Caco-2 (cell line): ENCODE measurements at regions of chr14 and their contacts with region 1.

Region 1: GRCh38 chr14:103500148-103500990 is 22.3 kb downstream of the CKB start:
- DNase-seq: peak; percentile 74 to 84
- H3K4me3 ChIP-seq: no peak overlapping the region
- H3K4me3 Mint-ChIP-seq: no peak overlapping the region
- H3K27ac Mint-ChIP-seq: peak overlapping the region; percentile 47
- H3K4me1 ChIP-seq: no peaks in the 10 kb centered on the region
- H3K4me1 Mint-ChIP-seq: no peaks in the 10 kb centered on the region
- H3K27me3 ChIP-seq: no peaks in the 10 kb centered on the region
- H3K27me3 Mint-ChIP-seq: no peaks in the 10 kb centered on the region
- CTCF ChIP-seq: peak; percentile 80 to 95

Region 2: GRCh38 chr14:103534576-103535061 is 34.2 kb after region 1 on chr14:
- CTCF ChIA-PET with region 1: no interaction called
- POLR2A ChIA-PET with region 1: no interaction called
- intact Hi-C with region 1: no loop called
- DNase-seq: no peak
- H3K4me3 ChIP-seq: no peak overlapping the region
- H3K4me3 Mint-ChIP-seq: no peak overlapping the region
- H3K27ac Mint-ChIP-seq: no peak overlapping the region
- H3K4me1 ChIP-seq: 0 out of 2 replicates have a peak, but pooled peaks cover 7% of the 10 kb centered on the region
- H3K4me1 Mint-ChIP-seq: no peaks in the 10 kb centered on the region
- H3K27me3 ChIP-seq: no peaks in the 10 kb centered on the region
- H3K27me3 Mint-ChIP-seq: no peaks in the 10 kb centered on the region
- CTCF ChIP-seq: no peak

Region 3: DNA sequence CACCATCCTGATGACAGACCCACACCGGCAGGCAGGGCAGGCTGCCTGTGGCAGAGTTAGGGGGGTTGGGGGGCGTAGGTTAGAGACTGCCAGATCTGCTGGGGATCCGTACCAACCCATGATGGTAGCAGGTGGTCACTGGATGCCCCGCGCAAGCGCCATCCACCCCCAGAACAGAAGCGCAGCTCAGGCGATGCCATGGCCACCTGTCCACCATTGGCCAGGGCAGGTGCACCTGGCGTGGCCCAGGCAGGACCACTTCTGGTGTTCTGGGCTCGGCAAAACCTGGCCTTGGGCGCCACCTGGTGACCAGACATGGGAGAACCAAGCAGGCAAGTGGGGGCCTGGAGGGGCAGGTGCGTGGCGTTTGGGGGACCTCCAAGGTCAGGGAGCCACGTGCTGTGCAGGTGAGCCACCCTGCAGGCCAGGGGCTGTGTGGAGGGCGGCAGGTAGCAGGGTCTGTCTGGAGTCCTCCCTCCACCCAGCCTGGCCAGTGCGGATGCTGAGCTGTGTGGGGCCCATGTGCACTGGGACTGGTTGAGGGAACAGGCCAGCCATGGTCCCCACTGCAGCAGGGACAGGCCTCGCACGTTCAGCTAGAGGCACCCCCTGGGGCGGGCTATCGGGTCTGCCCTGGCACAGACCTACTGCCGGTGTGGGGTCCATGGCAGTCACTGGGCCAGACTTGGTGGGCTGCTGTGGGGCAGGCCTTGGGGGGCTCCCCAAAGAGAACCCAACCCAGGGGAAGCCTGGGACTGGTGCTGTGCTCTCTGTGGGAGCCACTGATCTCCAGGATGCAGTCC is 46.5 kb after region 1 on chr14:
- CTCF ChIA-PET with region 1: interaction called, 3 read pairs
- POLR2A ChIA-PET with region 1: no interaction called
- intact Hi-C with region 1: loop called (anchors 1 kb)
- DNase-seq: peak; percentile 73 to 85
- H3K4me3 ChIP-seq: no peak overlapping the region
- H3K4me3 Mint-ChIP-seq: no peak overlapping the region
- H3K27ac Mint-ChIP-seq: no peak overlapping the region
- H3K4me1 ChIP-seq: peaks cover 6% of the 10 kb centered on the region
- H3K4me1 Mint-ChIP-seq: no peaks in the 10 kb centered on the region
- H3K27me3 ChIP-seq: no peaks in the 10 kb centered on the region
- H3K27me3 Mint-ChIP-seq: no peaks in the 10 kb centered on the region
- CTCF ChIP-seq: peak; percentile 87